Activated B cell treated with CpG ODN at 0.5 μM for 24 hours (primary cell): ENCODE measurements at regions of chr11 and their contacts with region 1.

Region 1: GRCh38 chr11:118353084-118353710 is 6.2 kb upstream of the UBE4A start:
- DNase-seq: no peak
- ATAC-seq: no peak
- H3K4me3 Mint-ChIP-seq: no peak overlapping the region
- H3K27ac Mint-ChIP-seq: no peak overlapping the region
- H3K4me1 Mint-ChIP-seq: peaks cover 2% of the 10 kb centered on the region
- H3K27me3 Mint-ChIP-seq: peaks cover 4% of the 10 kb centered on the region
- CTCF ChIP-seq: peak; percentile 40

Region 2: GRCh38 chr11:117315285-117316196 is 1037.7 kb before region 1 on chr11:
- CTCF ChIA-PET with region 1: no interaction called
- POLR2A ChIA-PET with region 1: no interaction called
- intact Hi-C with region 1: no loop called
- DNase-seq: peak; percentile 25
- ATAC-seq: peak; percentile 66
- H3K4me3 Mint-ChIP-seq: peak overlapping the region; percentile 79
- H3K27ac Mint-ChIP-seq: no peak overlapping the region
- H3K4me1 Mint-ChIP-seq: peaks cover 10% of the 10 kb centered on the region
- H3K27me3 Mint-ChIP-seq: peaks cover 41% of the 10 kb centered on the region
- CTCF ChIP-seq: no peak

Region 3: GRCh38 chr11:118295834-118296454 is 57.3 kb before region 1 on chr11:
- CTCF ChIA-PET with region 1: interaction called, 16 read pairs
- POLR2A ChIA-PET with region 1: interaction called, 5 read pairs
- intact Hi-C with region 1: loop called (anchors 1 kb)
- DNase-seq: no peak
- ATAC-seq: peak; percentile 34
- H3K4me3 Mint-ChIP-seq: no peak overlapping the region
- H3K27ac Mint-ChIP-seq: no peak overlapping the region
- H3K4me1 Mint-ChIP-seq: no peaks in the 10 kb centered on the region
- H3K27me3 Mint-ChIP-seq: peaks cover 11% of the 10 kb centered on the region
- CTCF ChIP-seq: peak; percentile 44